CD4-positive, alpha-beta T cell (primary cell): ENCODE measurements at regions of chr1 and their contacts with region 1.

Region 1: DNA sequence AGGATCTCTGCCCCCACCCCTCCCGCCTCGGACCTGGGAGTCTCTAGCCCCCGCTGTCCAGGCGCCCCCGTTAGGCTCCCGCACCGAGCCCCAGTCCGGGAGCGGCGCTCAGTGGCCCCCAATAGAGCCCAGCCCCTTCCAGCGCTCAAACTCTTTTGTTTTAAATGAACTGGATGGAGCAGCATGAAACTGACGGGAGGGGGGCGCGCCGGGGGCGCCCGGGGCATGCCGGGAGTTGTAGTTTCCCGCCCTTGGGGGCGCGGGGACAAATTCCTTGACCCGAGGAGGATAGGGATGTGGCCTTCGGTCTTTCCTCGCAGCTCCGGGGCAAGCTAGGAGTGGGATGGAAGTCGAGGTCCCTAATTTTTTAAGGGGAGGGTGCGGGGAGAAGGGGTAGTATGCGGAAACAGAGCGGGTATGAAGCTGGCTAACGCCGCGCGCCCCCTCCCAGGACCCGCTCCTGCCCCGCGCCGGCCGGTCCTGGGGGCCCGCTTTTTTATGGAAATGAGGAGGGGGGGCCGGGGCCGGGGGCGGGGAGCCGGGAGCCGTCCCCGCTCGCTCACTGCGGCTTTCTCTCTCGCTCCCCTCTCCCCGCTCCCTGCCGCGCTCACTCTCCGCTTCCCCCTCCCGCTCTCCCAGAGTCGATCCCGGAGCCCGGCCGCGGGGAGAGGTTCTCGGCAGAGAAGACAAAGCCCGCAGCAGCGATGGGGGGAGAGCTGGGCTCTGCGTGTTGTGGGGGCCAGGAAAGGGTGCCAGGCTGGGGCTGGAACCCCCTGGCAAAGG is at the start of gene MEX3A:
- DNase-seq: peak in 13 of 14 experiments; percentile 31 to 73 (median 49)
- ATAC-seq: peak; percentile 90
- H3K4me3 ChIP-seq: peak within 1 kb of the TSS; percentile 75
- H3K4me3 Mint-ChIP-seq: peak within 1 kb of the TSS; percentile 83
- H3K27ac ChIP-seq: no peak within 1 kb of the TSS
- H3K27ac Mint-ChIP-seq: no peak within 1 kb of the TSS
- H3K4me1 ChIP-seq: peaks cover 23% of the 10 kb centered on the region
- H3K4me1 Mint-ChIP-seq: peaks cover 6% of the 10 kb centered on the region
- H3K27me3 ChIP-seq: peaks cover 22 to 33% of the 10 kb centered on the region in 2 experiments
- H3K27me3 Mint-ChIP-seq: peaks cover 48% of the 10 kb centered on the region
- CTCF ChIP-seq: no peak
- total RNA-seq, gene MEX3A: 0.27 to 0.36 TPM

Region 2: DNA sequence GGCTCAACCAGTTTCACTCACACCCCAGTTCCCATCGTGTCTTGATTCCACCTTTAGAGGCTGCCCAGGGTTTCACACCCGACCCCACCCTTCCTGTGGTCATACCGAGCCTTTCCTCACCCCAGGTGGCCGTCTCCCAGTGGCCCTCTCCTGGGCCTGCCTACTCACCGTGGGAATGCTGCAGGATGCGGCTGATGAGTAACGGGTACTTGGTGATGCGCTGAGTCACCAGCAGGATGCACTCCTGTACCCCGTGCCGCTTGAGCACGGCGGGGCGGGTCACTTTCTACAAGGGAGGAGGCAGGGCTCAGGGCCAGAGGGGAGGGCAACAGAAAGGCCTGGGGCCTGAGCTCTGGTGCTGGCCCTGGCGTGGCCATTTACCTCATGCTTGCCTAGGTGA is 120.6 kb before region 1 on chr1:
- CTCF ChIA-PET with region 1: no interaction called
- POLR2A ChIA-PET with region 1: no interaction called
- intact Hi-C with region 1: no loop called
- DNase-seq: peak in 4 of 14 experiments; percentile 31 to 69 (median 50)
- ATAC-seq: peak; percentile 49
- H3K4me3 ChIP-seq: no peak overlapping the region
- H3K4me3 Mint-ChIP-seq: no peak overlapping the region
- H3K27ac ChIP-seq: peak overlapping the region; percentile 34 to 39
- H3K27ac Mint-ChIP-seq: peak overlapping the region; percentile 63
- H3K4me1 ChIP-seq: peaks cover 35% of the 10 kb centered on the region
- H3K4me1 Mint-ChIP-seq: peaks cover 2% of the 10 kb centered on the region
- H3K27me3 ChIP-seq: no peaks in the 10 kb centered on the region
- H3K27me3 Mint-ChIP-seq: no peaks in the 10 kb centered on the region
- CTCF ChIP-seq: no peak

Region 3: GRCh38 chr1:156020292-156021089 is 62.0 kb before region 1 on chr1 and contains the start of gene SSR2:
- CTCF ChIA-PET with region 1: no interaction called
- POLR2A ChIA-PET with region 1: no interaction called
- intact Hi-C with region 1: loop called in 1 of 2 experiments (anchors 2 kb)
- DNase-seq: peak; percentile 61 to 94 (median 77)
- ATAC-seq: peak; percentile 99
- H3K4me3 ChIP-seq: peak within 1 kb of the TSS; percentile 78
- H3K4me3 Mint-ChIP-seq: peak within 1 kb of the TSS; percentile 100
- H3K27ac ChIP-seq: peak within 1 kb of the TSS; percentile 38 to 77
- H3K27ac Mint-ChIP-seq: peak within 1 kb of the TSS; percentile 91
- H3K4me1 ChIP-seq: peaks cover 18% of the 10 kb centered on the region
- H3K4me1 Mint-ChIP-seq: peaks cover 41% of the 10 kb centered on the region
- H3K27me3 ChIP-seq: no peaks in the 10 kb centered on the region
- H3K27me3 Mint-ChIP-seq: no peaks in the 10 kb centered on the region
- CTCF ChIP-seq: no peak
- total RNA-seq, gene SSR2: 223 to 225 TPM